Caco-2 (cell line): ENCODE measurements at regions of chr3 and their contacts with region 1.

Region 1: DNA sequence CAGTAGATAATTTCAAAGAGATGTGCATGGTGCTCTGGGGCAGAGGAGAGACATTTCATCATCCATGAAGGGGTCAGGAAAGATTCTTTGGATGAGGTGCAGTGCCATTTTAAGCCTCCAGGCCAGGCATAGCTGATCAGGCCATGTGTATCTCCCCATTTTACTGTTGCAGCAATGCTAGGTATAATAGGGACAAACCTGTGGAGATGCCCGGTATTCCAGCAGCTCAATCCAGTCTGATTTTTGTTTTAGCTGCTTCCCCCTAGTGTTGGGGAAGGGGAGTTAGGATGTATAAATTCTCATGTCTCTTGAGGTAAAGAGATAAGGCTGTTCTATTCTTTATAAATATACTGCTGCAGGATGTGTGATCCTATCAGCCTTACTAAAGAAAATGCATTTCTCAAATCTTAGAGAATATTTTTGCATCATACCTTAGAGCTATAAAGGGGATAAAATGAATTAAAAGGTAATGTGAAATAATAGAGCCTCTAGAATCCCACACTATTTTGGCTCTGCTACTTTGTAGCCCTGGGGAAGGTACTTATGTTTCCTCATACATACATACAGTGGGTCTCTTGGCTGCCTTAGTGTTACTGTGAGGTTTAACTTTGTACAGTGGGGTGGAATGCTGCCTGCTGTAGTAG is 5.2 kb downstream of the CDV3 start:
- DNase-seq: peak; percentile 73 to 75
- H3K4me3 ChIP-seq: no peak overlapping the region
- H3K4me3 Mint-ChIP-seq: peak overlapping the region; percentile 31
- H3K27ac Mint-ChIP-seq: no peak overlapping the region
- H3K4me1 ChIP-seq: peaks cover 21% of the 10 kb centered on the region
- H3K4me1 Mint-ChIP-seq: peaks cover 7% of the 10 kb centered on the region
- H3K27me3 ChIP-seq: no peaks in the 10 kb centered on the region
- H3K27me3 Mint-ChIP-seq: no peaks in the 10 kb centered on the region
- CTCF ChIP-seq: peak; percentile 53 to 73

Region 2: DNA sequence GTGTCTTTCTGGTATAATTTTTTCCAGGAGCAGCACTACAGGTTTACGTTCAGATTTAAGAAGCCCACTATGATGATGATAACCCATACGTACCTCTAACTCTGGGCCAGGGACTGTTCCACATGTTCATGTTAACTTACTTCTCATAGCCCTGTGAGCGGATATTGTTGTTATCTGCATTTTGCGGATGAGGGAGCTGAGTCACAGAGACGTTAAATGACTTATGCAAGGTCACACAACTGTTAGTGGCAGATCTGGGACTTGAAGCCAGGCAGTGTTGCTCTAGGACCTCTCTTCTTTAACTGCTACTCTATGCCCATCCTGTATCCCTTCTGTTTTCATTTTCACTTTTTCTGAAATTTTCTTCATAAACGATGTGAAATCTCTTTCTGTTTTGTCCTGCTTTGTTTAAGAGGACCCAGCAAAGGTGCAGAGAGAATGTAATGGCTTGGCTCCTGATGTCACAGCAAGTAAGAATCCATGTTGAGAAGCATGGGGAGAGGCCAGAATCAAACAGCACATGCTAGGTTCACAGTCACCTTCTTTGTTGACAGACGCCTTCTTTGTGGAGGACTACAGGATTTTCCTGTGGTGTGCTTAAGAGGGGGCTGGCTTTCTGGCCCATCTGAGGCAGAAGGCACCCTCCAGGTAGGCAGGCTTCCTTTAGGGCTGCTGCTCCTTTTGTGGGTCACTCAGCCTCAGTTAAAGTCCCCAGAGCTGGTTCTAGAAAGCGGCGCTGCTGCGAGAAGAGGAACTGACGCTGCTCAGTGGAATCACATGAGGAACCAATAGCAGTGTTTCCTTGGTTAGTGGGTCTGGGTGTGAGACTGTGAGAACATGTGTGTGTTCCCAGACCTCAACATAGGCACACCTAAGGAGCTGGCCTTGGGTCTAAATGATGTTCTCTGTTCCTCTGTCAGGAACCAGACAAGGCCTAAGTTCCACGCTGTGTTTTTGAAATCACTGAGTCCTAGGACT is 418.9 kb before region 1 on chr3:
- CTCF ChIA-PET with region 1: no interaction called
- POLR2A ChIA-PET with region 1: no interaction called
- intact Hi-C with region 1: no loop called
- DNase-seq: no peak
- H3K4me3 ChIP-seq: no peak overlapping the region
- H3K4me3 Mint-ChIP-seq: no peak overlapping the region
- H3K27ac Mint-ChIP-seq: no peak overlapping the region
- H3K4me1 ChIP-seq: no peaks in the 10 kb centered on the region
- H3K4me1 Mint-ChIP-seq: no peaks in the 10 kb centered on the region
- H3K27me3 ChIP-seq: no peaks in the 10 kb centered on the region
- H3K27me3 Mint-ChIP-seq: peaks cover 16% of the 10 kb centered on the region
- CTCF ChIP-seq: no peak

Region 3: GRCh38 chr3:133464573-133464972 is 114.1 kb before region 1 on chr3:
- CTCF ChIA-PET with region 1: interaction called, 18 read pairs
- POLR2A ChIA-PET with region 1: interaction called, 3 read pairs
- intact Hi-C with region 1: no loop called
- DNase-seq: no peak
- H3K4me3 ChIP-seq: no peak overlapping the region
- H3K4me3 Mint-ChIP-seq: no peak overlapping the region
- H3K27ac Mint-ChIP-seq: no peak overlapping the region
- H3K4me1 ChIP-seq: peaks cover 46% of the 10 kb centered on the region
- H3K4me1 Mint-ChIP-seq: peaks cover 35% of the 10 kb centered on the region
- H3K27me3 ChIP-seq: no peaks in the 10 kb centered on the region
- H3K27me3 Mint-ChIP-seq: no peaks in the 10 kb centered on the region
- CTCF ChIP-seq: peak in 1 of 2 experiments; percentile 25

Region 4: GRCh38 chr3:133487920-133488540 is 90.6 kb before region 1 on chr3:
- CTCF ChIA-PET with region 1: interaction called, 12 read pairs
- POLR2A ChIA-PET with region 1: interaction called, 6 read pairs
- intact Hi-C with region 1: no loop called
- DNase-seq: no peak
- H3K4me3 ChIP-seq: no peak overlapping the region
- H3K4me3 Mint-ChIP-seq: no peak overlapping the region
- H3K27ac Mint-ChIP-seq: no peak overlapping the region
- H3K4me1 ChIP-seq: 0 out of 2 replicates have a peak, but pooled peaks cover 3% of the 10 kb centered on the region
- H3K4me1 Mint-ChIP-seq: peaks cover 9% of the 10 kb centered on the region
- H3K27me3 ChIP-seq: no peaks in the 10 kb centered on the region
- H3K27me3 Mint-ChIP-seq: no peaks in the 10 kb centered on the region
- CTCF ChIP-seq: no peak

Region 5: GRCh38 chr3:133494469-133494868 is 84.2 kb before region 1 on chr3:
- CTCF ChIA-PET with region 1: interaction called, 15 read pairs
- POLR2A ChIA-PET with region 1: no interaction called
- intact Hi-C with region 1: loop called (anchors 1 kb)
- DNase-seq: peak; percentile 70 to 76
- H3K4me3 ChIP-seq: no peak overlapping the region
- H3K4me3 Mint-ChIP-seq: no peak overlapping the region
- H3K27ac Mint-ChIP-seq: no peak overlapping the region
- H3K4me1 ChIP-seq: peaks cover 8% of the 10 kb centered on the region
- H3K4me1 Mint-ChIP-seq: peaks cover 9% of the 10 kb centered on the region
- H3K27me3 ChIP-seq: no peaks in the 10 kb centered on the region
- H3K27me3 Mint-ChIP-seq: no peaks in the 10 kb centered on the region
- CTCF ChIP-seq: peak; percentile 65 to 72

Region 6: DNA sequence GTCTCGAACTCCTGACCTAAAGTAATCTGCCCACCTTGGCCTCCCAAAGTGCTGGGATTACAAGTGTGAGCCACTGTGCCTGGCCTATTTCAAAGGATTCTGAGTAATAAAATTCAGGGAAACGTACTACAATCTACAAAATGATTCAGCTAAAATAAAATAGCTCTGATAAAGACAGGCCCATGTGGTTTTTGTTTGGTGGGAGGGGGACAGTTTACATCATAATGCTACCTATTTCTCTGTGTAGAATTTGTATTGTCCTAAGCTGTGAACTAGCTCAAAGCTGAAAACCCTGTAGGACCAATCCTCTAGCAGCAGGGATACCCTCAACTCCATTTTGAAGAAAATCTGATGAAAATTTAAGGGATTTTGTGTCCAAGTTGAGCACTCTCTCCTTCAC is 20.6 kb after region 1 on chr3:
- CTCF ChIA-PET with region 1: no interaction called
- POLR2A ChIA-PET with region 1: no interaction called
- intact Hi-C with region 1: no loop called
- DNase-seq: no peak
- H3K4me3 ChIP-seq: no peak overlapping the region
- H3K4me3 Mint-ChIP-seq: no peak overlapping the region
- H3K27ac Mint-ChIP-seq: no peak overlapping the region
- H3K4me1 ChIP-seq: peaks cover 17% of the 10 kb centered on the region
- H3K4me1 Mint-ChIP-seq: peaks cover 7% of the 10 kb centered on the region
- H3K27me3 ChIP-seq: no peaks in the 10 kb centered on the region
- H3K27me3 Mint-ChIP-seq: no peaks in the 10 kb centered on the region
- CTCF ChIP-seq: no peak

Region 7: GRCh38 chr3:134087046-134087985 is 508.6 kb after region 1 on chr3:
- CTCF ChIA-PET with region 1: no interaction called
- POLR2A ChIA-PET with region 1: no interaction called
- intact Hi-C with region 1: no loop called
- DNase-seq: no peak
- H3K4me3 ChIP-seq: no peak overlapping the region
- H3K4me3 Mint-ChIP-seq: no peak overlapping the region
- H3K27ac Mint-ChIP-seq: no peak overlapping the region
- H3K4me1 ChIP-seq: peaks cover 5% of the 10 kb centered on the region
- H3K4me1 Mint-ChIP-seq: peaks cover 3% of the 10 kb centered on the region
- H3K27me3 ChIP-seq: no peaks in the 10 kb centered on the region
- H3K27me3 Mint-ChIP-seq: no peaks in the 10 kb centered on the region
- CTCF ChIP-seq: no peak

Region 8: GRCh38 chr3:134656211-134656800 is 1077.6 kb after region 1 on chr3:
- CTCF ChIA-PET with region 1: no interaction called
- POLR2A ChIA-PET with region 1: no interaction called
- intact Hi-C with region 1: no loop called
- DNase-seq: no peak
- H3K4me3 ChIP-seq: no peak overlapping the region
- H3K4me3 Mint-ChIP-seq: no peak overlapping the region
- H3K27ac Mint-ChIP-seq: no peak overlapping the region
- H3K4me1 ChIP-seq: no peaks in the 10 kb centered on the region
- H3K4me1 Mint-ChIP-seq: no peaks in the 10 kb centered on the region
- H3K27me3 ChIP-seq: peaks cover 3% of the 10 kb centered on the region
- H3K27me3 Mint-ChIP-seq: peaks cover 21% of the 10 kb centered on the region
- CTCF ChIP-seq: no peak